ENCODE measurements at regions of chr2 and their contacts with region 1.

Region 1: GRCh38 chr2:10911261-10912075 is at the start of gene KCNF1:
- DNase-seq: peak; percentile 55
- total RNA-seq, gene KCNF1: 0.27 TPM

Region 2: GRCh38 chr2:11124503-11125068 is 213.1 kb after region 1 on chr2:
- intact Hi-C with region 1: loop called (anchors 5 kb)
- DNase-seq: no peak

Measured in cardiac septum (tissue), 1 donor.